Right lobe of liver (tissue), 6 donors: ENCODE measurements at regions of chr4 and their contacts with region 1.

Region 1: DNA sequence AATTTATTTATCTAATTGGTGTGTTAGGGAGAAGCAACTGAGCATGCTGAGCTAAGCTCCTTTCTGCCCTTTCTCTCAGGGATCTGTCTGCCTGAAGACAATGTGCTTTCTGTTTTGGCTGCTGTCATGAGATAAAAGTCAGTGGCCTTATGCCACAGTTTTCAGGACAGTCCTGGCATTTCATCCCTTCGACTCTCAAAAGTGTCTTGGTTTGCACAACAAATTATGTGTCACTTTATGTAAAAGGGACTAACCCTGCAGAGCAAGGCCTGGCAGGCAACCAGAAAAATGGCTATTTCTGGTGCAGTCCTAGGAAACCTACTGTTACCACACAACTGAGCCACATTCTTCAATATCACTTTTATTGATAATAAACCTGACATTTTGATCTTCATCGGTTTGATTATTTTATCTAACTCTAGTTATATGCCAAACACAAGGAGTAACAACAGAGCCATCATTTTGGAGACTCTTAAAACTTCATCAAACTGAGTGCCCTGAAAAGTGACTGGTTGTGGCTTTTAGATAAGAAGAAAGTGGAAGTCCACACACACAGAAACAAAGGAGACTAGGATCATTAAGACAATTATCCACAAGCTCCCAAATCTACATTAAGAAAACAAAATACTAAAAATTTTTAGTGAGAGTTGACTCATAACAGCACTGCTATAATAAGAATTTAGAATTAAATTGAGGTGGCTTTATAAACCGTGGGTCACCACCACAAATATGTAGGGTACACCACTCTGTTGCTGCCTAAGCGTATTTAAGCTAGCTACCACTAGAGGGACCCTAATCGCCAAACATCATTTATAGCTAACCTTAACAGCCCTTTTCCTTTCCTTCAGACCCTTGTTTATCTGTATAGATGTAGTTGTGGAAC is 95.9 kb upstream of the PTPN13 start:
- DNase-seq: no peak
- ATAC-seq: peak; percentile 87 to 91 (median 90)
- H3K4me3 ChIP-seq: no peak overlapping the region
- H3K27ac ChIP-seq: no peak overlapping the region
- H3K4me1 ChIP-seq: no peaks in the 10 kb centered on the region
- H3K27me3 ChIP-seq: peaks cover 0 to 4% of the 10 kb centered on the region in 2 donors
- CTCF ChIP-seq: peak; percentile 67 to 84 (median 78)
- POLR2A ChIP-seq: no peak

Region 2: DNA sequence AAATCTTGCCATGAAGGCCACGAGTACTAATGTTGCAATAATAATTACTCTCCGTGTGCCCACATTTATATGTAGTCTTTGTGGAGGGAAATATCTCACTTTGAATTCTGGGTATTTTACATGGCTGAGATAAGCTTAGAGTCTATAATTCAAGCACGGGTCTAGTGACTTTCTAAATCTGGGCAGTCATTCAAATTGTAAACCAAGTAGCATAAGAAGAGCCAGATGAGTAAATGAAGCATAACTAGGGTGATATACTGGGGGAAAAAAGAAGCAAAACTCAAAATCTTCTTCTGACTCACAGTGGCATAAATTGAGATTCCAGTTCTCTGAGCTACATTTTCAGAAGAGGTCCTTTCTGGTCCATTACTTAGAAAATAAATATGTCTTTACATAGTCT is 191.4 kb before region 1 on chr4:
- intact Hi-C with region 1: no loop called
- DNase-seq: no peak
- ATAC-seq: no peak
- H3K4me3 ChIP-seq: no peak overlapping the region
- H3K27ac ChIP-seq: no peak overlapping the region
- H3K4me1 ChIP-seq: no peaks in the 10 kb centered on the region
- H3K27me3 ChIP-seq: no peaks in the 10 kb centered on the region
- CTCF ChIP-seq: no peak
- POLR2A ChIP-seq: no peak

Region 3: GRCh38 chr4:86398187-86398586 is 100.0 kb before region 1 on chr4:
- intact Hi-C with region 1: no loop called
- DNase-seq: no peak
- ATAC-seq: no peak
- H3K4me3 ChIP-seq: no peak overlapping the region
- H3K27ac ChIP-seq: no peak overlapping the region
- H3K4me1 ChIP-seq: no peaks in the 10 kb centered on the region
- H3K27me3 ChIP-seq: no peaks in the 10 kb centered on the region
- CTCF ChIP-seq: no peak
- POLR2A ChIP-seq: no peak

Region 4: GRCh38 chr4:86569103-86569870 is 71.1 kb after region 1 on chr4:
- intact Hi-C with region 1: no loop called
- DNase-seq: no peak
- ATAC-seq: no peak
- H3K4me3 ChIP-seq: no peak overlapping the region
- H3K27ac ChIP-seq: no peak overlapping the region
- H3K4me1 ChIP-seq: no peaks in the 10 kb centered on the region
- H3K27me3 ChIP-seq: no peaks in the 10 kb centered on the region
- CTCF ChIP-seq: no peak
- POLR2A ChIP-seq: no peak

Region 5: GRCh38 chr4:86895692-86896488 is 397.7 kb after region 1 on chr4:
- intact Hi-C with region 1: loop called (anchors 5 to 10 kb)
- DNase-seq: no peak
- ATAC-seq: peak; percentile 56 to 70 (median 66)
- H3K4me3 ChIP-seq: no peak overlapping the region
- H3K27ac ChIP-seq: no peak overlapping the region
- H3K4me1 ChIP-seq: no peaks in the 10 kb centered on the region
- H3K27me3 ChIP-seq: no peaks in the 10 kb centered on the region
- CTCF ChIP-seq: peak; percentile 75 to 81 (median 76)
- POLR2A ChIP-seq: no peak